Activated CD8-positive, alpha-beta T cell treated with anti-CD3 and anti-CD28 coated beads for 36 hours (primary cell): ENCODE measurements at regions of chr12 and their contacts with region 1.

Region 1: GRCh38 chr12:89709157-89709994 is 738 bp upstream of the ATP2B1 start:
- DNase-seq: peak; percentile 98
- ATAC-seq: peak; percentile 86
- H3K4me3 Mint-ChIP-seq: peak overlapping the region; percentile 82
- H3K27ac Mint-ChIP-seq: peak overlapping the region; percentile 81
- H3K4me1 Mint-ChIP-seq: peaks cover 31% of the 10 kb centered on the region
- H3K27me3 Mint-ChIP-seq: no peaks in the 10 kb centered on the region
- CTCF ChIP-seq: no peak

Region 2: GRCh38 chr12:89663577-89664357 is 45.6 kb before region 1 on chr12:
- CTCF ChIA-PET with region 1: interaction called, 3 read pairs
- POLR2A ChIA-PET with region 1: interaction called, 13 read pairs
- intact Hi-C with region 1: loop called (anchors 5 kb)
- DNase-seq: peak; percentile 34
- ATAC-seq: peak; percentile 87
- H3K4me3 Mint-ChIP-seq: peak overlapping the region; percentile 15
- H3K27ac Mint-ChIP-seq: peak overlapping the region; percentile 59
- H3K4me1 Mint-ChIP-seq: peaks cover 63% of the 10 kb centered on the region
- H3K27me3 Mint-ChIP-seq: no peaks in the 10 kb centered on the region
- CTCF ChIP-seq: no peak

Region 3: GRCh38 chr12:89862511-89863179 is 153.3 kb after region 1 on chr12:
- CTCF ChIA-PET with region 1: interaction called, 3 read pairs
- POLR2A ChIA-PET with region 1: interaction called, 4 read pairs
- intact Hi-C with region 1: loop called (anchors 5 kb)
- DNase-seq: peak; percentile 45
- ATAC-seq: peak; percentile 43
- H3K4me3 Mint-ChIP-seq: peak overlapping the region; percentile 69
- H3K27ac Mint-ChIP-seq: peak overlapping the region; percentile 94
- H3K4me1 Mint-ChIP-seq: peaks cover 57% of the 10 kb centered on the region
- H3K27me3 Mint-ChIP-seq: no peaks in the 10 kb centered on the region
- CTCF ChIP-seq: no peak